ENCODE measurements at regions of chr10 and their contacts with region 1.

Region 1: DNA sequence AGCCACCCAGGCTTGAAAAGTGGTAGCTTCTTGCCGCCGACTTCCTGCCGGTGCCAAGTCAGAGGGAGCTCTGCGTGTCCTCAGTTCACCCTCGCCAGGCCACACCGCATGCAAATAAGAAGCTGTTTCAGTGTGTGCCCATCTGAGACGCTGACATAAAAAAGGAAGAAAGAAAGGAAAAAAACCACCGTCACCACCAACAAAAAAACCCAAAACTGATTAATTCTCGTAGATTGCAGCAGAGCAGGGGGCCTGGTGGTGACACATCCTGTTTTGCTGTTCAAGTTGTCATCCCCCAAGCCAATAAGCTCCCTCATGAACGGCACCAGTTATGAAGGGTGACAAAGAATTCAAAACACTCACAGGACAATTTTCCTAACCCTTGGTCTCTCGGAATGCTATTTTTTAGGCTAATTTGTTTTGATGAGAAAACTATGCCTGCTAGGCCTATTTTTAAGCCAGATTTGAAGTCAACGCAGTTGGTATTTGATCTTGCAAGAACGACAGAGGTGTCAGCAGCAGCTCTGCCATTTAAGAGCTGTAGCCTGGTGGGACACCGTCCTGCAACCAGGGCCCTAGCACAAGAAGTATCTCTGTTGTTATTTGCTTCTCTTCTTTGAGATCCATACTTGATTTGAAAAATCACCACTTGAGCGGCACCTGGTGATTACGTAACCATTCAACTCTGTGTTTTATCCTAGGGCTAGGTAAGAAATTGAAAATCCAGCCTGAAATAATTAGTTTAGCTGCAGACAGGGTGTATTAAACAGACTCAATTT is 145.6 kb downstream of the PFKFB3 start:
- DNase-seq: peak; percentile 87 to 95 (median 89)
- H3K4me3 ChIP-seq: peak overlapping the region in 1 of 2 donors; percentile 43
- H3K4me3 Mint-ChIP-seq: peak overlapping the region; percentile 77 to 90 (median 80)
- H3K27ac ChIP-seq: peak overlapping the region; percentile 55
- H3K27ac Mint-ChIP-seq: peak overlapping the region; percentile 93 to 97 (median 96)
- H3K4me1 ChIP-seq: peaks cover 31% of the 10 kb centered on the region
- H3K4me1 Mint-ChIP-seq: peaks cover 35 to 56% (median 45%) of the 10 kb centered on the region in 4 donors
- H3K27me3 ChIP-seq: no peaks in the 10 kb centered on the region
- H3K27me3 Mint-ChIP-seq: no peaks in the 10 kb centered on the region

Region 2: DNA sequence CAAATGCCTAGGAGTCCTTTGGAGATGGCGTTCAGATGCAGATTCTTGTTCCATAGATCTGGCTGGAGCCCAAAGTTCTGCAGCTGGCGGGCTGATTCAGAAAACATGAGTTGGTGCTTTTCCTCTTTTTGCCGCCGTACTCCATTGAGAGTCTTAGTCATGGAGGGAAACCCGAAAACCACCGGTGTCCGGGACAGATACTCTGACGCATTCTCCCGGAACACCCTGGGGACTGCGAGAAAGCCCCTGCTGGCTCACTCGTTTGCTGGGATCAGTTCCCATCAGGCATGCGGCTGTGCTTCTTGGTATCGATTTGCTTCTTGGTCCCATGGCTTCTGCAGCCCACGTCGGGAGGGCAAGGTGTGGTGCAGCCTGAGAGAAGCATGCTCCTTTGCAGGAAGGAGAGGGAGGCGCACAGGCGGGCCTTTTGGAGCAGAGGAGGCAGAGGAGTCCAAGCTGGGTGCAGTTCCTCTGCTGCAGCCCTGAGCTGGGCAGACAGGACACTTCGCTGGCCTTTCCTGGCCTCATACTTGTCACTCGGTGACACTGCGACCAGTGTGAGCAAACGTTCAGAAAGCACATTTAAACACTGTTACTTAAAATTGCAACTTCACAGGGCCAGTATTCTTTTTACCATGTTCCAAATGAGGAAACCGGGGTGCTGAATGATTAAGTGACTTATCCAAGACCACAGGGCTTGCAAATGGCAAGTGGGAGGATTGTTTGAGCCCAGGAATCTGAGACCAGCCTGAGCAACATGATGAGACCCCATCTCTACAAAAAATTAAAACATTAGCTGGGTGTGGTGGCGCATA is 176.2 kb before region 1 on chr10:
- CTCF ChIA-PET with region 1: interaction called, 19 read pairs
- POLR2A ChIA-PET with region 1: interaction called, 6 read pairs
- intact Hi-C with region 1: no loop called
- DNase-seq: no peak
- H3K4me3 ChIP-seq: no peak overlapping the region
- H3K4me3 Mint-ChIP-seq: peak overlapping the region in 4 of 8 donors; percentile 29 to 79 (median 62)
- H3K27ac ChIP-seq: no peak overlapping the region
- H3K27ac Mint-ChIP-seq: peak overlapping the region in 6 of 7 donors; percentile 22 to 74 (median 58)
- H3K4me1 ChIP-seq: peaks cover 77% of the 10 kb centered on the region
- H3K4me1 Mint-ChIP-seq: peaks cover 50 to 94% (median 72%) of the 10 kb centered on the region in 4 donors
- H3K27me3 ChIP-seq: no peaks in the 10 kb centered on the region
- H3K27me3 Mint-ChIP-seq: no peaks in the 10 kb centered on the region

Region 3: DNA sequence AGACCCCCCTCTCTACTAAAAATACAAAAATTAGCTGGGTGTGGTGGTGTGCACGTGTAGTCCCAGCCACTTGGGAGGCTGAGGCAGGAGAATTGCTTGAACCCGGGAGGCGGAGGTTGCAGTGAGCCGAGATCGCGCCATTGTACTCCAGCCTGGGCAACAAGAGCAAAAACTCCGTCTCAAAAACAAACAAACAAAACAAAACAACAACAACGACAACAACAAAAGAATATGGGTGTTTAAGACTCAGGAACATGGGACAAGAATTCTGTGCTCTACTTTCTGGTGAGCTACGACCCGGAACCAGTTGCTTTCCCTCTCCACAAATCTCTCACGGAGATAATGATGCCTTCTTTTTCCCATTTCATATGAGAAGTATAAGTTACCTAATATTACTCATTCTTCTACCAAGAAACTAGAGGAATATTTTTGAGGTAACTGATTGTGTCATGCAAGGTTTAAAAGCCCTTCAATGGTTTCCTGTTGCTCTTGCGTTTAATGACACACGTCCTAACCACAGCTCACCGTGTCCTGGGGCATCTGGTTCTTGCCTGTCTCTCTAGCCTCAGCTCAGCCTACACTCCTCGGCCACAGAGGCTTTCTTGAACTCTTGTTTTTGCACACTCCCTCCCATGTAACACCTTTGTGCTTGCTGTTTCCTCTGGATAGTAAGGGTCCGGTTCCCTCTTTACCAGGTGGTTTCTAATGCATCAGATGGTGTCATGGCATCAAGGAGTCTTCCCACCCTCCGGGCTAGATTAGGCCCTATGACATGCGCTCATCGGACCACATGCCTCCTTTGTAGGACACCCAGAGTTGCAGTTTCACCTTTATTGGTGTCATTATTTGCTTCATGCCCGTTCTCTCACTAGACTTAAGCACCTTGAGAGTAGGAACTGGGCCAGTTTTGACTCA is 78.1 kb before region 1 on chr10:
- CTCF ChIA-PET with region 1: interaction called, 6 read pairs
- POLR2A ChIA-PET with region 1: interaction called, 30 read pairs
- intact Hi-C with region 1: loop called (anchors 1 kb)
- DNase-seq: peak; percentile 77 to 90 (median 82)
- H3K4me3 ChIP-seq: no peak overlapping the region
- H3K4me3 Mint-ChIP-seq: peak overlapping the region in 7 of 8 donors; percentile 53 to 75 (median 63)
- H3K27ac ChIP-seq: peak overlapping the region; percentile 58
- H3K27ac Mint-ChIP-seq: peak overlapping the region; percentile 96 to 99 (median 97)
- H3K4me1 ChIP-seq: peaks cover 38% of the 10 kb centered on the region
- H3K4me1 Mint-ChIP-seq: peaks cover 35 to 51% (median 44%) of the 10 kb centered on the region in 4 donors
- H3K27me3 ChIP-seq: no peaks in the 10 kb centered on the region
- H3K27me3 Mint-ChIP-seq: no peaks in the 10 kb centered on the region

Region 4: DNA sequence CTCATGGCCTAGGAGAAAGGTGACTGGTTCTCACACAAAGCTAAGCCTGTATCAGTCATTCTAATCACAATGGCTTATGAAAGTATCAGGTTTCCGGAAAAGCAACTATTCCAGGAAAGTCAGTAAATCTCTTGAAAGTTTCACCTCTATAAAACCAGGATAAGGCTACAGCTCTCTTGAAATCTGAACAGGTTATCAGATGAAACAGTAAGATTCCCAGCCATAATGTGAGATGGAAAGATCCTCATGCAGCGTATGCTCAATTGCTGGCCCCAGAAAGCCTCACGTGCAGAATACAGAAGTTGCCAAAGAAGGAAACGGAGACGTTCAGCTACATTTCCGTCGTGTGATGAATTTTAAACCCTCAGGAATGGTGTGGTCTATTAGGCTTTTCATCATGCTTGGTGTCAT is 55.5 kb before region 1 on chr10:
- CTCF ChIA-PET with region 1: interaction called, 4 read pairs
- POLR2A ChIA-PET with region 1: interaction called, 10 read pairs
- intact Hi-C with region 1: no loop called
- DNase-seq: no peak
- H3K4me3 ChIP-seq: no peak overlapping the region
- H3K4me3 Mint-ChIP-seq: peak overlapping the region in 2 of 8 donors; percentile 23 to 31
- H3K27ac ChIP-seq: no peak overlapping the region
- H3K27ac Mint-ChIP-seq: peak overlapping the region; percentile 42 to 79 (median 72)
- H3K4me1 ChIP-seq: peaks cover 15% of the 10 kb centered on the region
- H3K4me1 Mint-ChIP-seq: peaks cover 9 to 46% (median 28%) of the 10 kb centered on the region in 4 donors
- H3K27me3 ChIP-seq: no peaks in the 10 kb centered on the region
- H3K27me3 Mint-ChIP-seq: no peaks in the 10 kb centered on the region

Region 5: GRCh38 chr10:6328699-6329423 is 19.4 kb before region 1 on chr10:
- CTCF ChIA-PET with region 1: no interaction called
- POLR2A ChIA-PET with region 1: no interaction called
- intact Hi-C with region 1: no loop called
- DNase-seq: no peak
- H3K4me3 ChIP-seq: no peak overlapping the region
- H3K4me3 Mint-ChIP-seq: no peak overlapping the region
- H3K27ac ChIP-seq: no peak overlapping the region
- H3K27ac Mint-ChIP-seq: peak overlapping the region in 1 of 7 donors; percentile 32
- H3K4me1 ChIP-seq: no peaks in the 10 kb centered on the region
- H3K4me1 Mint-ChIP-seq: no peaks in the 10 kb centered on the region
- H3K27me3 ChIP-seq: no peaks in the 10 kb centered on the region
- H3K27me3 Mint-ChIP-seq: no peaks in the 10 kb centered on the region

Region 6: DNA sequence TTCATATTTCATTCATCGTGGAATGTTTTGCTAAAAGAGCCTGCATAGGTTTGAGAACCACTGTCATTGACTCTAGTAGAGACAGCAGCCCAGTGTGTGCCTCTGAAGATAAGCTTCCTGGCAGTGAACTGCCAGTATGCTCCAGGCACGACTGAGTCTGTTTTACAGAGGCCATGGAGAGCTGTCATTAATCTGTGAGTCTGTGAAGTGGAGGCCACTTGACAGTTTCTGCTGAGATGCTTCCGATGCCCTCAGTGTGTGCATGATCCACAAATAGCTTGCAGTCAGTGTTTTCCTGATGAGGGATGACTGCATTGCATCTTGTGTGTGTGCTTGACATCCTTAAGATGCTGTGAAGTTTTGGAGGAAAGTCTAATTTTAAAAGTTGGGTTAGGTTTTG is 16.6 kb after region 1 on chr10:
- CTCF ChIA-PET with region 1: interaction called, 9 read pairs
- POLR2A ChIA-PET with region 1: interaction called, 13 read pairs
- intact Hi-C with region 1: no loop called
- DNase-seq: no peak
- H3K4me3 ChIP-seq: no peak overlapping the region
- H3K4me3 Mint-ChIP-seq: no peak overlapping the region
- H3K27ac ChIP-seq: no peak overlapping the region
- H3K27ac Mint-ChIP-seq: no peak overlapping the region
- H3K4me1 ChIP-seq: no peaks in the 10 kb centered on the region
- H3K4me1 Mint-ChIP-seq: no peaks in the 10 kb centered on the region
- H3K27me3 ChIP-seq: no peaks in the 10 kb centered on the region
- H3K27me3 Mint-ChIP-seq: peaks cover 2% of the 10 kb centered on the region in 2 donors

Region 7: GRCh38 chr10:6409971-6410651 is 61.8 kb after region 1 on chr10:
- CTCF ChIA-PET with region 1: interaction called, 14 read pairs
- POLR2A ChIA-PET with region 1: interaction called, 27 read pairs
- intact Hi-C with region 1: loop called (anchors 1 kb)
- DNase-seq: peak; percentile 71 to 84 (median 79)
- H3K4me3 ChIP-seq: peak overlapping the region; percentile 11 to 34
- H3K4me3 Mint-ChIP-seq: peak overlapping the region; percentile 76 to 93 (median 81)
- H3K27ac ChIP-seq: peak overlapping the region; percentile 78
- H3K27ac Mint-ChIP-seq: peak overlapping the region; percentile 93 to 99 (median 98)
- H3K4me1 ChIP-seq: peaks cover 50% of the 10 kb centered on the region
- H3K4me1 Mint-ChIP-seq: peaks cover 31 to 66% (median 44%) of the 10 kb centered on the region in 4 donors
- H3K27me3 ChIP-seq: no peaks in the 10 kb centered on the region
- H3K27me3 Mint-ChIP-seq: no peaks in the 10 kb centered on the region